ENCODE measurements at regions of chr18 and their contacts with region 1.

Region 1: DNA sequence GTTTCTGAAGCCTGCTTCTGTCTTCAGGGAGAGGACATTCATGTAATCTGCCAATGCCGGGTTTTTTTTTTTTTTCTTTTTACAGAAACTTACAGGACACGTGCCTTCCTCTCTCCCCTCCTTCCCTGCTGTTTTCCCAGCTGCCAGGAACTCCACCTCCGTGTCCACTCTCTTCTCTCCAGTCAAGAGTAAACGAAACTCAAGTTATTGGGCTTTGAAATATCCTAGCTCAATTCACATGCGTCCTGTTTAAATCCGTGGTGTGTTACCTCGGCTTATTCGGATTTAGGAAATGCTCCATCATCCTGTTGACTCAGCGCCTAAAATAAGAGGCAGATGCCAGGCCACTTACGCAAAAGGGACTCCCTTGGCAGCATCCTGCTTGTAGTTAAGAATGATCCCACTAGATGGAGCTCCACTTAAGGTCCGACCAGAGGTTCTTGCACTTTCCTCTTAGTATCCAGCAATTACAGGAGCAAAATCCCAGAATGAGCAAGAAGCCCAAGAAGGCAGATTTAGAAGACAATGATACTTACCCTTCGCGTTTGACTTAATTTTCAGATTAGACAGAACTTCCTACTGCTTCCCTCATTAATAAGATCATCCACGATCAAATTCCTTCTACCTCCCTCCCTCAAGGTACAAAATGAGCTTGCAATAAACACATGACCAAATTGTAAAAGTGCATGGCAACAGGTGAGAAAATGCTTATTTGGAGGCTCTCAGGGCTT is 97.2 kb upstream of the ZCCHC2 start:
- DNase-seq: peak; percentile 50 to 63 (median 61)
- H3K4me3 ChIP-seq: no peak overlapping the region
- H3K4me3 Mint-ChIP-seq: peak overlapping the region in 1 of 8 donors; percentile 18
- H3K27ac ChIP-seq: no peak overlapping the region
- H3K27ac Mint-ChIP-seq: peak overlapping the region in 4 of 7 donors; percentile 19 to 66 (median 52)
- H3K4me1 ChIP-seq: peaks cover 8% of the 10 kb centered on the region
- H3K4me1 Mint-ChIP-seq: peaks cover 13 to 16% (median 16%) of the 10 kb centered on the region in 4 donors
- H3K27me3 ChIP-seq: no peaks in the 10 kb centered on the region
- H3K27me3 Mint-ChIP-seq: peaks cover 0 to 3% of the 10 kb centered on the region in 2 donors

Region 2: GRCh38 chr18:62061821-62062478 is 363.7 kb before region 1 on chr18:
- CTCF ChIA-PET with region 1: no interaction called
- POLR2A ChIA-PET with region 1: no interaction called
- intact Hi-C with region 1: no loop called
- DNase-seq: no peak
- H3K4me3 ChIP-seq: no peak overlapping the region
- H3K4me3 Mint-ChIP-seq: no peak overlapping the region
- H3K27ac ChIP-seq: no peak overlapping the region
- H3K27ac Mint-ChIP-seq: no peak overlapping the region
- H3K4me1 ChIP-seq: no peaks in the 10 kb centered on the region
- H3K4me1 Mint-ChIP-seq: no peaks in the 10 kb centered on the region
- H3K27me3 ChIP-seq: no peaks in the 10 kb centered on the region
- H3K27me3 Mint-ChIP-seq: no peaks in the 10 kb centered on the region

Region 3: GRCh38 chr18:62437235-62438017 is 11.8 kb after region 1 on chr18:
- CTCF ChIA-PET with region 1: interaction called, 19 read pairs
- POLR2A ChIA-PET with region 1: interaction called, 3 read pairs
- intact Hi-C with region 1: no loop called
- DNase-seq: no peak
- H3K4me3 ChIP-seq: no peak overlapping the region
- H3K4me3 Mint-ChIP-seq: no peak overlapping the region
- H3K27ac ChIP-seq: no peak overlapping the region
- H3K27ac Mint-ChIP-seq: peak overlapping the region in 1 of 7 donors; percentile 47
- H3K4me1 ChIP-seq: no peaks in the 10 kb centered on the region
- H3K4me1 Mint-ChIP-seq: no peaks in the 10 kb centered on the region
- H3K27me3 ChIP-seq: no peaks in the 10 kb centered on the region
- H3K27me3 Mint-ChIP-seq: peaks cover 0 to 2% of the 10 kb centered on the region in 2 donors

Region 4: GRCh38 chr18:62505669-62506494 is 80.3 kb after region 1 on chr18:
- CTCF ChIA-PET with region 1: interaction called, 6 read pairs
- POLR2A ChIA-PET with region 1: interaction called, 11 read pairs
- intact Hi-C with region 1: no loop called
- DNase-seq: peak in 4 of 5 donors; percentile 38 to 48 (median 42)
- H3K4me3 ChIP-seq: peak overlapping the region; percentile 56 to 91
- H3K4me3 Mint-ChIP-seq: peak overlapping the region; percentile 85 to 95 (median 90)
- H3K27ac ChIP-seq: peak overlapping the region; percentile 72
- H3K27ac Mint-ChIP-seq: peak overlapping the region; percentile 90 to 98 (median 94)
- H3K4me1 ChIP-seq: peaks cover 16% of the 10 kb centered on the region
- H3K4me1 Mint-ChIP-seq: peaks cover 11 to 23% (median 17%) of the 10 kb centered on the region in 4 donors
- H3K27me3 ChIP-seq: no peaks in the 10 kb centered on the region
- H3K27me3 Mint-ChIP-seq: no peaks in the 10 kb centered on the region

Region 5: DNA sequence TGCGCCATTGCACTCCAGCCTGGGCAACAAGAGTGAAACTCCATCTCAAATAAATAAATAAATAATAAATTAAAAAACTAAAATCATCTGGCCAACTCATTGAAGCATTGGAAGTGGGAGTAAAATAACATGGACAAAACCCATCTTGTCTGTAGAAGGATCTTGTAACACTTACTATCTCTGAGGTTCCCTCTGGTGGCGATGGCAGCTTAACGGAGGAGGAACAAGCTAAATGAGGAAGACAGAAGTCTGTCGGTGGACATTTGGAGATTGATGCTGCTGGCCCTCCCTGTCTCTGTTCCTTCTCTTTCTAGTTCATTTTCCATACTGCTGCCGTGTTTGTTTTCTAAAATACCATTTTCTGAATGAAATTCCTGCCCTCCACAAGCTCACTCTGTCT is 140.6 kb after region 1 on chr18:
- CTCF ChIA-PET with region 1: interaction called, 7 read pairs
- POLR2A ChIA-PET with region 1: interaction called, 3 read pairs
- intact Hi-C with region 1: loop called (anchors 5 kb)
- DNase-seq: no peak
- H3K4me3 ChIP-seq: no peak overlapping the region
- H3K4me3 Mint-ChIP-seq: no peak overlapping the region
- H3K27ac ChIP-seq: no peak overlapping the region
- H3K27ac Mint-ChIP-seq: peak overlapping the region in 4 of 7 donors; percentile 11 to 70 (median 41)
- H3K4me1 ChIP-seq: no peaks in the 10 kb centered on the region
- H3K4me1 Mint-ChIP-seq: peaks cover 0 to 7% (median 3%) of the 10 kb centered on the region in 4 donors
- H3K27me3 ChIP-seq: no peaks in the 10 kb centered on the region
- H3K27me3 Mint-ChIP-seq: no peaks in the 10 kb centered on the region

Region 6: GRCh38 chr18:62621546-62621945 is 195.9 kb after region 1 on chr18:
- CTCF ChIA-PET with region 1: no interaction called
- POLR2A ChIA-PET with region 1: no interaction called
- intact Hi-C with region 1: no loop called
- DNase-seq: no peak
- H3K4me3 ChIP-seq: no peak overlapping the region
- H3K4me3 Mint-ChIP-seq: no peak overlapping the region
- H3K27ac ChIP-seq: no peak overlapping the region
- H3K27ac Mint-ChIP-seq: no peak overlapping the region
- H3K4me1 ChIP-seq: no peaks in the 10 kb centered on the region
- H3K4me1 Mint-ChIP-seq: no peaks in the 10 kb centered on the region
- H3K27me3 ChIP-seq: no peaks in the 10 kb centered on the region
- H3K27me3 Mint-ChIP-seq: peaks cover 8 to 17% of the 10 kb centered on the region in 2 donors